HCT116 (cell line): ENCODE measurements at regions of chr3 and their contacts with region 1.

Region 1: DNA sequence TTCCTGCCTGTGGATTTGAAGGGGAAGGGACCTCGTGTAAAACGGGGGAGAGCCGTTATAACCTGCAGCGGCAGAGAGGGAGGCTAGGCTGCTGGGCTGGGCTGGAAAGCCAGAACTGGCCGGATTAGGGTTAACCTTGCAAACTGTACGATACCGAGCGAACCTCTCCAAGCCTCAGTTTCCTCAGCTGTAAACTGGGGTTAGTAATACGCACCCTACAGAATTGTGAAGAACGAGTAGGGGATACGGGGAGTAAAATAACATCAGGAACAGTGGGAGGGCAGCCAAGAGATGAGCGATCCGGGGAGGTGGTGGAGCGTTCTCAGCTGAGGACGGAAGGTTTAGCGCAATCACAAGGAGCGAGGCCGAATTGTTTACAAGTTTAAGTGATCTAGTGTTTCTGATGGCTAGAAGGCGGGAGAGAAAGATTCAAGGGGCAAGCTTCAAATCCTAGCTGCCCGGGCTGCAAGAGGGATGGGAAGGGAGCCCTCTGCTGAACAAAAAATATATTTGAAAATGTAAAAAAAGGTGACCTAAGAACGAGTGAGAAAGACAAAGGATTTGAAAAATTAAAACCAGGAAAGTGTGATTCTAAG is 768 bp upstream of the SEMA5B start:
- DNase-seq: peak; percentile 43
- ATAC-seq: peak; percentile 67
- H3K4me3 ChIP-seq: peak overlapping the region; percentile 40 to 58
- H3K27ac ChIP-seq: no peak overlapping the region
- H3K4me1 ChIP-seq: peaks cover 4 to 16% of the 10 kb centered on the region in 2 experiments; a peak in 3 of 4 replicates
- H3K27me3 ChIP-seq: peaks cover 24% of the 10 kb centered on the region; the same call in 1 of the 2 replicates
- CTCF ChIP-seq: peak; percentile 43 to 83 (median 55)
- POLR2A ChIP-seq: no peak
- RAD21 ChIP-seq: peak; percentile 80

Region 2: GRCh38 chr3:122294365-122294764 is 734.0 kb before region 1 on chr3:
- CTCF ChIA-PET with region 1: no interaction called
- POLR2A ChIA-PET with region 1: no interaction called
- RAD21 ChIA-PET with region 1: no interaction called
- intact Hi-C with region 1: no loop called
- DNase-seq: no peak
- ATAC-seq: no peak
- H3K4me3 ChIP-seq: no peak overlapping the region
- H3K27ac ChIP-seq: no peak overlapping the region
- H3K4me1 ChIP-seq: no peaks in the 10 kb centered on the region
- H3K27me3 ChIP-seq: no peaks in the 10 kb centered on the region
- CTCF ChIP-seq: no peak
- POLR2A ChIP-seq: no peak
- RAD21 ChIP-seq: no peak

Region 3: GRCh38 chr3:122754929-122755328 is 273.4 kb before region 1 on chr3:
- CTCF ChIA-PET with region 1: interaction called, 4 read pairs
- POLR2A ChIA-PET with region 1: no interaction called
- RAD21 ChIA-PET with region 1: interaction called in 1 of 2 experiments, 3 read pairs
- intact Hi-C with region 1: loop called (anchors 1 kb)
- DNase-seq: peak; percentile 34
- ATAC-seq: peak; percentile 95
- H3K4me3 ChIP-seq: no peak overlapping the region
- H3K27ac ChIP-seq: no peak overlapping the region
- H3K4me1 ChIP-seq: no peaks in the 10 kb centered on the region
- H3K27me3 ChIP-seq: no peaks in the 10 kb centered on the region
- CTCF ChIP-seq: peak; percentile 67 to 89 (median 87); a peak in 5 of 6 replicates
- POLR2A ChIP-seq: no peak
- RAD21 ChIP-seq: peak; percentile 77

Region 4: GRCh38 chr3:122858373-122858772 is 170.0 kb before region 1 on chr3:
- CTCF ChIA-PET with region 1: no interaction called
- POLR2A ChIA-PET with region 1: no interaction called
- RAD21 ChIA-PET with region 1: no interaction called
- intact Hi-C with region 1: loop called (anchors 5 kb)
- DNase-seq: peak; percentile 15
- ATAC-seq: no peak
- H3K4me3 ChIP-seq: no peak overlapping the region
- H3K27ac ChIP-seq: no peak overlapping the region
- H3K4me1 ChIP-seq: no peaks in the 10 kb centered on the region
- H3K27me3 ChIP-seq: no peaks in the 10 kb centered on the region
- CTCF ChIP-seq: peak; percentile 26 to 50 (median 50); a peak in 4 of 6 replicates
- POLR2A ChIP-seq: no peak
- RAD21 ChIP-seq: peak; percentile 65

Region 5: GRCh38 chr3:122942937-122943827 is 85.1 kb before region 1 on chr3:
- CTCF ChIA-PET with region 1: interaction called, 5 read pairs
- POLR2A ChIA-PET with region 1: no interaction called
- RAD21 ChIA-PET with region 1: no interaction called
- intact Hi-C with region 1: loop called (anchors 2 kb)
- DNase-seq: peak; percentile 41
- ATAC-seq: peak; percentile 99
- H3K4me3 ChIP-seq: no peak overlapping the region
- H3K27ac ChIP-seq: no peak overlapping the region
- H3K4me1 ChIP-seq: no peaks in the 10 kb centered on the region
- H3K27me3 ChIP-seq: no peaks in the 10 kb centered on the region
- CTCF ChIP-seq: peak; percentile 94 to 99 (median 96)
- POLR2A ChIP-seq: no peak
- RAD21 ChIP-seq: peak; percentile 93

Region 6: DNA sequence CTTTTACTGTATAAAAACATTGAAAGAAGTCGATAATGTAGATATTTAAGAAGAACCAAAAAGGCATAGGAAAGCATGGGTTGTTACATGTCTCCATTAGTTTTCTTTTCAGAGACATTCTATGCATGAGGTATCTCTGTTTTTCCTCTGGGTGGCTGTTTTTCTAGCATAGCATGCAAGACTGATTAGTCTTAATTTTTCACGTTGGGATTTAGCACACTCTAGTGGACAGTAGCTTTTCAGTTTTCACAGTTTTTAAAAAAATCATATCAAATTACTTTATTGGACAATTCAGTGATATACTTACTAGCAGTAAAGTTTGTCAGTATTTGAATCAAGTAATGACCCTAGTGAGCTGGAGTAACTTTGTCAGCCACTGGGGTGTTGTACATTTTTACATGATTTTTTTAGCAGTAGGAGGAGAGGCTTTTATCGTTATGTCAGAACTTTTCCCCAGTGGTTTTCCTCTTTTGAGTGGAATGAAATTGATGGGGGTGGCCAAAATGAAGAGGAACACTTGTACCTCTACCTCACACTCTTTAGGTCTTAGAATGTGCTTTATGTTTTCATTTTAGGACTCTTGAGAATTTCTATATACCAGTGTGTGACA is 230.6 kb after region 1 on chr3:
- CTCF ChIA-PET with region 1: no interaction called
- POLR2A ChIA-PET with region 1: no interaction called
- RAD21 ChIA-PET with region 1: interaction called in 1 of 2 experiments, 7 read pairs
- intact Hi-C with region 1: loop called (anchors 5 kb)
- DNase-seq: peak; percentile 50
- ATAC-seq: peak; percentile 94
- H3K4me3 ChIP-seq: no peak overlapping the region
- H3K27ac ChIP-seq: no peak overlapping the region
- H3K4me1 ChIP-seq: no peaks in the 10 kb centered on the region
- H3K27me3 ChIP-seq: no peaks in the 10 kb centered on the region
- CTCF ChIP-seq: peak; percentile 59 to 96 (median 75)
- POLR2A ChIP-seq: no peak
- RAD21 ChIP-seq: peak; percentile 85